GM13977 (cell line): ENCODE measurements at regions of chr10 and their contacts with region 1.

Region 1: GRCh38 chr10:101297901-101298486 is 56.0 kb upstream of the BTRC start:
- DNase-seq: peak; percentile 81
- CTCF ChIP-seq: peak; percentile 96

Region 2: DNA sequence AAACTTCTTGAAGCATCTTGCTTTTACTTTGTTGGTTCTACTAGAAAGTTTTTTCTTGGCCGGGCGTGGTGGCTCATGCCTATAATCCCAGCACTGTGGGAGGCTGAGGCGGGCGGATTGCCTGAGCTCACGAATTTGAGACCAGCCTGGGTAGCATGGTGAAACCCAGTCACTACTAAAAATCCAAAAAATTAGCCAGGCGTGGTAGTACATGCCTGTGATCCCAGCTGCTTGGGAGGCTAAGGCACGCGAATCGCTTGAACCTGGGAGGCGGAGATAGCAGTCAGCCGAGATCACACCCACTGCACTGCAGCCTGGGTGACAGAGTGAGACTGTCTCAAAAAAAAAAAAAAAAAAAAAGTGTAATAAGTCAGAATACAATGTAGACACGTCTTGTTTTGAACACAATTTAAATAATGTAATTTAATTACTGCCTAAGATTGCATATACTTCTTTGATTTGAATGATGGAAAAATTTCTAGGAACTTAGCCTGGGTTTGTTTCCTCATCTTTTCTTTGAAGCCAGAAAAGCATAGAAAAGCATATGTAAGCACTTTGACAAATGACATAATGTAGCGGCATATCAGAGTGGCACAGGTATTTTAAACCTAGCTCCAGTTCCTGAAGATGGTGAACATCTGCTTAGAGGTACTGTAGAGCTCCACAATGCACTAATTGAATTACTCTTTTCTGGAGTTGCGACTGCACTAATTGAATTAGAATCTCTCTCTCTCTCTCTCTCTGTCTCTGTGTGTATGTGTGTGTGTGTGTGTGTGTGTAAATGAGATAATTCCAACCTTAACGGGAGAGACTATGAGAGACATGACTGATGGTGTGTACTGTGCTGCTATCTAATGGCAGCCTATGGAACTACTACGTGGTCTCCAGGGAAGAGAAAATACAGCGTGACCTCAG is 143.8 kb after region 1 on chr10:
- in situ Hi-C with region 1: loop called (anchors 25 kb)
- DNase-seq: peak; percentile 44
- CTCF ChIP-seq: peak; percentile 79

Region 3: DNA sequence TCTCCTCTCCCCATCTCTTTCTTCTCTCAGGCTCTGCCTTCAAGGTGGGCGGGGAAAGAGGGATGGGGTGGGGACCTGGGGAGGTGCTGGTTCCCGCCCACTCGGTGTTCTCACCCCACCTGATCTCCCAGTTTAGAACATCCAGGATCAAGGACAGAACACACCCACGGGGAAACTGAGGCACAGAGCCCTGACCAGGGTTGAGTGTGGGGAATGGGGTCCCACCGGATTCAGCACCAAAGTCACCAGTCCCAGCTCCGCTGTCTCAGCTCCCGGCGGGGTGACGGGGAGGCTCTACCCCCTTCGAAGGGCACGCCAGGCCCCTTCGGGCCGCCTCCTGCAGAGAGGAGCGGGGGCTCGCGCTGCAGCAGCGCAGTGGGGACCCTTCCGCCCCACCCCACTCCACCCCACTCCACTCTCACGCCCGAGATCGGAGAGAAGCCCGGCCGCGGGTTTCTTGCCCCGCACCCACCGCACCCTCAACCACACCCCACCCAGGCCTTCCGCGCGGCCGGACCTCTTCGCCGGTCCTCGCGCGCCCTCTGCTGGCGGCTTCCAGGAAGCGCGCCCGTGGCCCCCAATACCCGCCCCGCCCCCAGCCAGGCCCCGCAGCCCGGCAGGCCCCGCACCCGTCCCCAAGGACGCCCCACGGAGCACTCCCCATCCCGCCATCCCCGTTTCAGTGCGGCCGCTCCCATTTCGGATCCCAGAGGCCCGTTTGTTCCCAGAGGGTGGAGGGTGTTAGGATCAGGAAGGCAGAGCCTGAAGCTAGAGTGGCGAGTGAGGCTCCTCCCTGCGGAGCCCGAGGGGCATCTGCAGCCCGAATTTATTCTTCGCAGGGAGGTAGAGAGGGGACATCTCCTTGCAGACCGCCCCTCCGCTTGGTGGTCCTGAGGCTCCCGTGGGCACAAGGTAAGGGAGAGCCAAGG is 272.1 kb after region 1 on chr10:
- in situ Hi-C with region 1: loop called (anchors 25 kb)
- DNase-seq: peak; percentile 94
- CTCF ChIP-seq: peak; percentile 90

Region 4: GRCh38 chr10:102358712-102359382 is 1060.9 kb after region 1 on chr10:
- in situ Hi-C with region 1: no loop called
- DNase-seq: no peak
- CTCF ChIP-seq: no peak